Calu3 (cell line): ENCODE measurements at regions of chr6 and their contacts with region 1.

Region 1: DNA sequence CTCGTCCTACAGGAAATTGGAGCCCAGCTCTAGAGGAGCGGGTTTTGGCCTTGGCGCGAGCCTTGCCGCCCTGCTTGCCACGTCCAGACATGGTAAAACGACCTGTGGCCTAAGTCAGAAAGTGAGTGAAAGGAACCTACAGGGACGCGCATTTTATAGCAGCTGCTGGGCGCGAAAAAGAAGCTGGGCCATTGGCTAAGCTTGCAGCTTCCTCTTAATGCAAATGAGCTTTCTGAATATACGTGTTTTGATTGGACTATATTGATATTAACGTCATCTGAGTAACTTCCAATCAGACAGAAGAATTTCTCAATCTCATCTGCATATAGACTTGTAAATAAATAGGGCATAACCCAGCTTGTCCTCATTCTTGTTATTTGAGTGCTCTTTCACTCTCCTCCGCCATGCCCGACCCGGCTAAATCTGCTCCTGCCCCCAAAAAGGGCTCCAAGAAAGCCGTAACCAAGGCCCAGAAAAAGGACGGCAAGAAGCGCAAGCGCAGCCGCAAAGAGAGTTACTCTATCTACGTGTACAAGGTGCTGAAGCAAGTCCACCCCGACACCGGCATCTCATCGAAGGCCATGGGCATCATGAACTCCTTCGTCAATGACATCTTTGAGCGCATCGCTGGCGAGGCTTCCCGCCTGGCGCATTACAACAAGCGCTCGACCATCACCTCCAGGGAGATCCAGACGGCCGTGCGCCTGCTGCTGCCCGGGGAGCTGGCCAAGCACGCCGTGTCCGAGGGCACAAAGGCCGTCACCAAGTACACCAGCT is 18.9 kb downstream of the OR2B2 start:
- DNase-seq: peak; percentile 94
- H3K4me3 Mint-ChIP-seq: no peak overlapping the region
- H3K27ac Mint-ChIP-seq: no peak overlapping the region
- H3K4me1 Mint-ChIP-seq: peaks cover 19% of the 10 kb centered on the region
- H3K27me3 Mint-ChIP-seq: no peaks in the 10 kb centered on the region
- CTCF ChIP-seq: no peak

Region 2: DNA sequence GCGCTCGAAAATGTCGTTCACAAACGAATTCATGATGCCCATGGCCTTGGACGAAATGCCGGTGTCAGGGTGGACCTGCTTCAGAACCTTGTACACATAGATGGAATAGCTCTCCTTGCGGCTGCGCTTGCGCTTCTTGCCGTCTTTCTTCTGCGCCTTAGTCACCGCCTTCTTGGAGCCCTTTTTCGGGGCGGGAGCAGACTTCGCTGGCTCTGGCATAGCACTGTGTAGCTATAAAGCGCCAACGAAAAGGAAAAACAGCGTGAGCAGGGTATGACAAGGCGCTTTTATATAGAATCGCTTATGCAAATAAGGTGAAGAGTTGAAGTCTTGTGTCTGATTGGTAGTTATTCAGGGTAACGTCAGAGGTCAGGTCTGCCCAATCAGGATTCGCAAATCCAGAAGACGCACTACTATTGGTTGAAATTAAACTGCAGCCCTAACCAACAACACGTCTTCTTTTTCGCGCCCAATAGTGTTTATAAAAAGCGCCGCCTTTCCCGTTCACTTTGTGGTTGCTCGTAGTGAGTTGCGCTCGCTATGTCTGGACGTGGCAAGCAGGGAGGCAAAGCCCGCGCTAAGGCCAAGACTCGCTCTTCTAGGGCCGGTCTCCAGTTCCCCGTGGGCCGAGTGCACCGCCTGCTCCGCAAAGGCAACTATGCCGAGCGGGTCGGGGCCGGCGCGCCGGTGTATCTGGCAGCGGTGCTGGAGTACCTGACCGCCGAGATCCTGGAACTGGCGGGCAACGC is 760.5 kb before region 1 on chr6:
- CTCF ChIA-PET with region 1: interaction called, 5 read pairs
- intact Hi-C with region 1: loop called (anchors 5 kb)
- DNase-seq: peak; percentile 92
- H3K4me3 Mint-ChIP-seq: no peak overlapping the region
- H3K27ac Mint-ChIP-seq: no peak overlapping the region
- H3K4me1 Mint-ChIP-seq: no peaks in the 10 kb centered on the region
- H3K27me3 Mint-ChIP-seq: no peaks in the 10 kb centered on the region
- CTCF ChIP-seq: no peak

Region 3: GRCh38 chr6:27518881-27519795 is 374.1 kb before region 1 on chr6:
- CTCF ChIA-PET with region 1: interaction called, 4 read pairs
- intact Hi-C with region 1: loop called (anchors 10 kb)
- DNase-seq: peak; percentile 72
- H3K4me3 Mint-ChIP-seq: peak overlapping the region; percentile 94
- H3K27ac Mint-ChIP-seq: peak overlapping the region; percentile 99
- H3K4me1 Mint-ChIP-seq: peaks cover 9% of the 10 kb centered on the region
- H3K27me3 Mint-ChIP-seq: no peaks in the 10 kb centered on the region
- CTCF ChIP-seq: peak; percentile 60

Region 4: DNA sequence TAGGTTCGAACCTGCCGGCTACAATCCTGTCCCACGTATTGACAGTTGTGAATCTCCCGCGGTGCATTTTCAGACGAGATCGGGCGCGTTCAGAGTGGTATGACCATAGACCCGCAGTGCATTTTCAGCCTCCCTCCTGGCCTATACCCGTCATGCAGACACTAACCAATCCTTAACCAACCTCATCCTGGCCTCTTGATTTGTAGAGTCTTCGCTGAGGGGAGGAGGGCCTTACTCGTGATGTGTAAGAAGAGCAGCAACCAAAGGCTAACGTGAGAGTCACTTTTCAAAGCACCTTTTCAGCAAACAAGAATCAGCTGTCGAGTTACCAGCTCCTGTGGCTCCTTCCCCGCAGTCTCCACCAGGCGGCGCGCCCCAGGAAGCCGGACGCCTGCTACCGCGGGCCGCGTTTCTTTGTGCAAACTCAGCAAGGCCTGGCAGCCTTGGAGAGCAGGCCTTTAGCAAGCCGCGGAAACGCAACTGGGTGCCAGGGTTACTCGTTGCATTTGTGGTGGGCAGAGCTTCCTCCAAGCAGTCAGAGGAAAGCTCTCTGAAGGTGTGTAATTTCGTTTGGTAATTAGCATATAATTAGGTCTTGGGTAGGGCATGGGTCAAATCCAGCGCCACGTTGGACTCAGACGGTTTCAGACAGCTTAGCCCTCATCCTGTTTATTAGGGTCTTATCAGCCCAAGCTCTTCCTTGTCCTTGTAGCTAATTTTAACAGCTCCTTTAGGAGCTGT is 120.8 kb before region 1 on chr6:
- CTCF ChIA-PET with region 1: interaction called, 25 read pairs
- intact Hi-C with region 1: no loop called
- DNase-seq: peak; percentile 94
- H3K4me3 Mint-ChIP-seq: no peak overlapping the region
- H3K27ac Mint-ChIP-seq: peak overlapping the region; percentile 21
- H3K4me1 Mint-ChIP-seq: peaks cover 25% of the 10 kb centered on the region
- H3K27me3 Mint-ChIP-seq: no peaks in the 10 kb centered on the region
- CTCF ChIP-seq: peak; percentile 95

Region 5: DNA sequence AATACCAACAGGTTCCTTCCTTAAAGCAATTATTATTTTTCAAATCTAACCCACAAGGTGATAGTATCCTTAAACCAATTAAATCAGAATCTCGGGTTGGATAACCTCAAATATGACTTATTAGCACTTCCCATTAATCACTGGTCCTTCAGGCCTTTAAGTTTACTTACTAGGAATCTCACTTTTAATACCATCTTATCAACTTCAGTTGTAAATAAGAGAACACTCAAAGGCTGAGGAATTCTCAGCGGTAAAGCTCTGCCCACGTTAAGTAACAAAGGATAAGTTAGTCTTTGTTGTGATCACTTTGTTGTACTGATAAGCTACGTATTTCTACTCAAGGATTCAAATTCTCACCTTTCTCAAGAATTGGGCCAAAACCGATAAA is 63.0 kb before region 1 on chr6:
- CTCF ChIA-PET with region 1: interaction called, 10 read pairs
- intact Hi-C with region 1: no loop called
- DNase-seq: no peak
- H3K4me3 Mint-ChIP-seq: peak overlapping the region; percentile 87
- H3K27ac Mint-ChIP-seq: peak overlapping the region; percentile 96
- H3K4me1 Mint-ChIP-seq: peaks cover 23% of the 10 kb centered on the region
- H3K27me3 Mint-ChIP-seq: no peaks in the 10 kb centered on the region
- CTCF ChIP-seq: no peak

Region 6: GRCh38 chr6:27871924-27872638 is 21.2 kb before region 1 on chr6:
- CTCF ChIA-PET with region 1: interaction called, 16 read pairs
- intact Hi-C with region 1: no loop called
- DNase-seq: peak; percentile 84
- H3K4me3 Mint-ChIP-seq: peak overlapping the region; percentile 74
- H3K27ac Mint-ChIP-seq: peak overlapping the region; percentile 98
- H3K4me1 Mint-ChIP-seq: peaks cover 25% of the 10 kb centered on the region
- H3K27me3 Mint-ChIP-seq: no peaks in the 10 kb centered on the region
- CTCF ChIP-seq: no peak